PC-9 (cell line): ENCODE measurements at regions of chr1 and their contacts with region 1.

Region 1: DNA sequence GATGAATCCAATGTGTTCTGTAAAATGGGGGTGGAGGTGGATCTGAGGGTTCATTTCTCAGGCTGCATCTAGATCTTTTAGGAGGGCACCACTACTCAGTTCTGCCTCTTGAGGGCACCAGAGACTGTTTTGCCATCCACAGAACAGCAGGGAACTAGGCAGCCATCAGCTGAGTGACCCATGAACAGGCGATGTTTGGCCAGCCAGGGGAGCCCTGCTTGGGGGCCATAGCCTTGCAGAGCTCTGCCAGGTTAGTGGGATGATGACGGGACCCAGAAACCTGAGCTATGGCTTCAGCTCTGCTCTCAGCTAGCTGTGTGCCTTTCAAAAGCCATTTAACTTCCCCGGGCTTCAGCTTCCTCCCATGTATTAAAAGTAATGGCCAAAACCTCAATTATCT is 13.4 kb upstream of the NOS1AP start:
- DNase-seq: peak; percentile 52 to 70
- H3K4me3 ChIP-seq: no peak overlapping the region
- H3K27ac ChIP-seq: no peak overlapping the region
- H3K4me1 ChIP-seq: peaks cover 15% of the 10 kb centered on the region
- H3K27me3 ChIP-seq: no peaks in the 10 kb centered on the region
- CTCF ChIP-seq: peak; percentile 92

Region 2: DNA sequence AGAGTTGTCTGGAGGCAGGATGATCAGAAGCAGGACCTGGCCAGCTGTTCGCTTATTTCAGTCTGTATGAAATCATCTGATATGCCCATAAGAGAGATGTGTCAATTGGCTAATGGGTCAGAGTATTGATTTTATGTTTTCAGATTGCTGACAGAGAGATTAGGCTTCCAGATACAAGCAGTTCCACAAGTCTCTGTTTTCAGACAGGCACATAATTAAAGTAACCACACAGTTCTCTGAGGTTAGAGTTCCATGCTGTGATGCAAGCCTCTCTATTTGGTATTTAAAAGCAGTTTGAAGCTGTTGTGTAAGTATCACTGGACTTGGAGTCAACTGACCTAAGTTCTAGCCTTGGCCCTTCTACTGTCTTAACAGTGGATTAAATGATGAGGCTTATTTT is 239.8 kb before region 1 on chr1:
- CTCF ChIA-PET with region 1: no interaction called
- POLR2A ChIA-PET with region 1: no interaction called
- intact Hi-C with region 1: no loop called
- DNase-seq: no peak
- H3K4me3 ChIP-seq: no peak overlapping the region
- H3K27ac ChIP-seq: no peak overlapping the region
- H3K4me1 ChIP-seq: no peaks in the 10 kb centered on the region
- H3K27me3 ChIP-seq: no peaks in the 10 kb centered on the region
- CTCF ChIP-seq: no peak

Region 3: GRCh38 chr1:162042361-162042760 is 13.7 kb before region 1 on chr1:
- CTCF ChIA-PET with region 1: no interaction called
- POLR2A ChIA-PET with region 1: no interaction called
- intact Hi-C with region 1: no loop called
- DNase-seq: no peak
- H3K4me3 ChIP-seq: no peak overlapping the region
- H3K27ac ChIP-seq: no peak overlapping the region
- H3K4me1 ChIP-seq: no peaks in the 10 kb centered on the region
- H3K27me3 ChIP-seq: no peaks in the 10 kb centered on the region
- CTCF ChIP-seq: no peak

Region 4: GRCh38 chr1:162215902-162216301 is 159.9 kb after region 1 on chr1:
- CTCF ChIA-PET with region 1: no interaction called
- POLR2A ChIA-PET with region 1: no interaction called
- intact Hi-C with region 1: loop called (anchors 5 kb)
- DNase-seq: peak in 1 of 2 experiments; percentile 31
- H3K4me3 ChIP-seq: no peak overlapping the region
- H3K27ac ChIP-seq: no peak overlapping the region
- H3K4me1 ChIP-seq: 0 out of 2 replicates have a peak, but pooled peaks cover 9% of the 10 kb centered on the region
- H3K27me3 ChIP-seq: no peaks in the 10 kb centered on the region
- CTCF ChIP-seq: no peak

Region 5: GRCh38 chr1:162276493-162276892 is 220.4 kb after region 1 on chr1:
- CTCF ChIA-PET with region 1: interaction called, 9 read pairs
- POLR2A ChIA-PET with region 1: no interaction called
- intact Hi-C with region 1: loop called (anchors 1 kb)
- DNase-seq: no peak
- H3K4me3 ChIP-seq: no peak overlapping the region
- H3K27ac ChIP-seq: no peak overlapping the region
- H3K4me1 ChIP-seq: no peaks in the 10 kb centered on the region
- H3K27me3 ChIP-seq: no peaks in the 10 kb centered on the region
- CTCF ChIP-seq: peak; percentile 71

Region 6: GRCh38 chr1:162349635-162350330 is 293.7 kb after region 1 on chr1:
- CTCF ChIA-PET with region 1: interaction called, 4 read pairs
- POLR2A ChIA-PET with region 1: no interaction called
- intact Hi-C with region 1: loop called (anchors 5 kb)
- DNase-seq: peak; percentile 43 to 95
- H3K4me3 ChIP-seq: peak overlapping the region; percentile 17; the same call in 1 of the 2 replicates
- H3K27ac ChIP-seq: peak overlapping the region; percentile 79
- H3K4me1 ChIP-seq: peaks cover 48% of the 10 kb centered on the region
- H3K27me3 ChIP-seq: no peaks in the 10 kb centered on the region
- CTCF ChIP-seq: no peak

Region 7: DNA sequence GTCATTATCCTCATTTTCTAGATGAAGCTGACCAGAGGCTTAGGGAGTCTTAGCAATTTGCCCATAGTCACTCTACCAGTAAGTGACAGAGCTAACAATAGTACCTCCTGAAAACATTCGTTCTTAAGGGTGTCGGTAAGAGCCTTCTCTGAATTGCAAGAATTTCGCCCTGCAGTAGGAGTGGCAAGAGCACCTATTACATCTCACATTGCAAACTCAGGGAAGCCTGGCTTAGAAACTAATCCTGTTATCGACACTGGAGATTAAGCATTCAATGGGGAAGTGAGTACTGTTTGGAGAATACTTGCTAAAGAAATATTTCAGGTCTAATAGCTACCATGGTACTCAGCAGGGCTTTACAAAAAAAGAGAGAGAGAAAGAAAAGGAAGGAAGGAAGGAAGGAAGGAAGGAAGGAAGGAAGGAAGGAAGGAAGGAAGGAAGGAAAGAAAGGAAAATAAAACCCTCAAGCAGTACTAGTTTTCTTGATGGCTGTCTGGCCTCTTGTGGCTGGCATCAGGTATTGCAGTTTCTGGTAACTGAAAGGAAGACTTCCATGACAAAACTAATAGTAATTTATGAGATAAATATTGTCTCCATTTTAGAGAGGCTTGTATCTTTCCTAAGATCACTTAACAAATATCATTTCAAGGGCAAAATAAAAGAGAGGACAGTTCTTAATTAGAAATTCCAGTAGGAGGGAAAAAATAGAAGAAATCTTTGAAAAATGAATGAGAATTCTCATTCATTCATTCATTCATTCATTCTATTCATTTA is 335.9 kb after region 1 on chr1:
- CTCF ChIA-PET with region 1: interaction called, 5 read pairs
- POLR2A ChIA-PET with region 1: no interaction called
- intact Hi-C with region 1: loop called (anchors 1 kb)
- DNase-seq: peak in 1 of 2 experiments; percentile 21
- H3K4me3 ChIP-seq: no peak overlapping the region
- H3K27ac ChIP-seq: no peak overlapping the region
- H3K4me1 ChIP-seq: no peaks in the 10 kb centered on the region
- H3K27me3 ChIP-seq: no peaks in the 10 kb centered on the region
- CTCF ChIP-seq: peak; percentile 95